ENCODE measurements at regions of chr7 and their contacts with region 1.

Region 1: GRCh38 chr7:116576350-116577319 is 51.8 kb downstream of the CAV1 start:
- DNase-seq: no peak
- ATAC-seq: peak; percentile 65
- H3K4me3 ChIP-seq: no peak overlapping the region
- H3K27ac ChIP-seq: no peak overlapping the region
- H3K4me1 ChIP-seq: peaks cover 25% of the 10 kb centered on the region
- H3K27me3 ChIP-seq: no peaks in the 10 kb centered on the region
- CTCF ChIP-seq: no peak
- EP300 ChIP-seq: no peak
- POLR2A ChIP-seq: no peak
- RAD21 ChIP-seq: no peak

Region 2: DNA sequence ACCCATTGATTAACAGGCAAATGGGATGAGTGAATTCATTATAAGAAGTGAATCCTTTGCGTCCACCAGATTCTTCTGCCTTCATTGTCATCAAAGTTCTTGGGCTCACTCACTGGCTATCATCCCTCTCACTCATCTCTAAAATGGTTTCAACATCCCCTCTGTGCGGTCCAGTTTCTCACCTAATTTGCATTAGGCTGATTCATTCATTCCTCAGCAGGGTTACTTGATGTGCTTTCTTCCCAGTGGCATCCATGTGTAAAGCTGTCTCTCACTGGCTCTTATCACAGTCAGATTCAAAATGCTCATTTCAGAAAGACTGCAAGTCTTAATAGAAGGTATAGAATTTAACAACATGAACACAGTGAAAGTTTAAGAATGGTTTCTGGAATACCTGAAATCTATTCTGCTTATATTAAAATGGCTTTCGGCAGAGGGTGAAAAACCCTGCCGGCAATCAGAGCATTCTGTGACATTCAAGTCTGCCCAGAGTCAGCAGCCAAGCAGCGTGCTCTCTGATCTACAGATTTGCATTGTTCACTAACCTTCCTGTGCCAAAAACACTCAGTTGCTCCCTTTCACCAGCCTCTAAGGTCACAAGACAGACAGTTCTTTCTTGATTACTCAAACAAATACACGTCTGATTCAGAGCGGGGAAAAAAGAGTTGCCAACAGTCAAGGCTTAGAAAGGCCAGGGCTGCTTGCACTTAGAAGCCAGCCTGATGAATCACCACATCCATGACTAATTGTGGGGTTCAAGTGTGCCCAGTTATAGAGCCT is 259.6 kb before region 1 on chr7:
- CTCF ChIA-PET with region 1: no interaction called
- POLR2A ChIA-PET with region 1: no interaction called
- RAD21 ChIA-PET with region 1: no interaction called
- SMC1A ChIA-PET with region 1: no interaction called
- in situ Hi-C with region 1: no loop called
- intact Hi-C with region 1: loop called (anchors 2 kb)
- DNase-seq: peak; percentile 77
- ATAC-seq: peak; percentile 92
- H3K4me3 ChIP-seq: no peak overlapping the region
- H3K27ac ChIP-seq: peak overlapping the region; percentile 27
- H3K4me1 ChIP-seq: peaks cover 15% of the 10 kb centered on the region
- H3K27me3 ChIP-seq: no peaks in the 10 kb centered on the region
- CTCF ChIP-seq: no peak
- EP300 ChIP-seq: 0 out of 4 replicates have a peak, but pooled peaks of 1 of the 2 experiments have one; percentile 18
- POLR2A ChIP-seq: no peak
- RAD21 ChIP-seq: no peak

Region 3: DNA sequence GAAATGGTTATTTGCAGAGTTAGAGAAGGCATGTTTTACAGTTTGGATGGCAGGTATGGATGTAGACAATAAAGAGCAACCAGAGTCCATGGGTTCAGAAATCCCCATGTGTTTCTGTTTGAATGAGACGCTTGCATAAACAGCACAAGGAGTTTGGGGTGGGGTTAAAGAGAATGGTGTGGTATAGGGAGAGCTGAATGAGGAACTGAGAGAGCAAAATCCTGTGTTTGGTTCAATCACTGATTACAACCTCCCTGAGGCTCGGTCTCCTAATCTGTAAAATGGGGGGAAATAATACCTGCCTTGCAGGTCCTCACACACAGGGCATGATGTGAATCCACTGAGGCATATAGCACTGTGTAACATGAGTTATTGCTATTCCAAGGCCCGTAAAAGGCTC is 28.1 kb before region 1 on chr7:
- CTCF ChIA-PET with region 1: interaction called, 4 read pairs
- POLR2A ChIA-PET with region 1: no interaction called
- RAD21 ChIA-PET with region 1: no interaction called
- SMC1A ChIA-PET with region 1: interaction called, 3 read pairs
- in situ Hi-C with region 1: no loop called
- intact Hi-C with region 1: loop called (anchors 2 kb)
- DNase-seq: peak; percentile 43
- ATAC-seq: peak; percentile 97
- H3K4me3 ChIP-seq: no peak overlapping the region
- H3K27ac ChIP-seq: no peak overlapping the region
- H3K4me1 ChIP-seq: peaks cover 14% of the 10 kb centered on the region
- H3K27me3 ChIP-seq: no peaks in the 10 kb centered on the region
- CTCF ChIP-seq: no peak
- EP300 ChIP-seq: no peak
- POLR2A ChIP-seq: no peak
- RAD21 ChIP-seq: no peak

Measured in GM12878 (cell line).